Activated T-helper 1 cell treated with anti-CD3 and anti-CD28 coated beads, Interleukin-12 subunit alpha, Interleukin-12 subunit beta, Interleukin-2, Interleukin-4 antibody, amounts not matched to agents 30 ng/mL and 10 ng/mL and 1 ng/mL, durations not matched to agents 14 hours and 24 hours and 36 hours (primary cell): ENCODE measurements at regions of chr10 and their contacts with region 1.

Region 1: GRCh38 chr10:122298598-122299301 is 27.7 kb downstream of the BTBD16 start:
- DNase-seq: peak; percentile 19
- H3K4me3 Mint-ChIP-seq: no peak overlapping the region
- H3K27ac Mint-ChIP-seq: no peak overlapping the region
- H3K4me1 Mint-ChIP-seq: peaks cover 9% of the 10 kb centered on the region
- H3K27me3 Mint-ChIP-seq: peaks cover 9% of the 10 kb centered on the region

Region 2: DNA sequence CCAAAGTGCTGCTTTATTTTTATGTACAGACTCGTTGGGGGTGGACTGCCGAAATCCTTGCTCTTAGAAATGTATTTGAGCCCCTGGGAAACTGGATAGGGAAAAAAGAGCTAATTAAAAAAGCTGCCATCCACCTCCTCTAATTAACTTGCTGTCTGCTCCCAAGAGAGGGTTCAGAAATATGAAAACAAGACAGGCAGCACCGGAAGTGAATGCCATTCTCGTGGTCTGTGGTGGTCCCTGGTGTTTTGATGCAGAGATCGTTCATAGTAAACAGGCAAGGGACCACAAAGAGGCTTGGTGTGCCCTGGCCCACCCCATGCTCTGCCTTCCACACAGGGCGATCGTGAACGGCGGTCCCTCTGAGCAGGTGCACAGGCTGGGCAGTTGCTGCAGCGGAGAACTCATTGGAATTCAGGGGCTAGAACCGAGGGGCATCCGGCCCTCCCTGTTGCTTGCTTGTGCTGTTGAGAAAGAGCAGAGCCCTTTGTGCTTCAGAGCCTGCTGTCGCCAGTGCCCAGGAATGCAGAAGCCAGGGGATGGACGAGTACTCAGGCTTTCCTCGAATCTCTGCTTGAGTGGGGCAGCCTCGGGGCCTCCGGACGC is 106.7 kb before region 1 on chr10:
- intact Hi-C with region 1: no loop called
- DNase-seq: no peak
- H3K4me3 Mint-ChIP-seq: no peak overlapping the region
- H3K27ac Mint-ChIP-seq: no peak overlapping the region
- H3K4me1 Mint-ChIP-seq: no peaks in the 10 kb centered on the region
- H3K27me3 Mint-ChIP-seq: no peaks in the 10 kb centered on the region

Region 3: GRCh38 chr10:122310311-122311050 is 11.7 kb after region 1 on chr10:
- intact Hi-C with region 1: no loop called
- DNase-seq: no peak
- H3K4me3 Mint-ChIP-seq: no peak overlapping the region
- H3K27ac Mint-ChIP-seq: no peak overlapping the region
- H3K4me1 Mint-ChIP-seq: no peaks in the 10 kb centered on the region
- H3K27me3 Mint-ChIP-seq: peaks cover 11% of the 10 kb centered on the region

Region 4: DNA sequence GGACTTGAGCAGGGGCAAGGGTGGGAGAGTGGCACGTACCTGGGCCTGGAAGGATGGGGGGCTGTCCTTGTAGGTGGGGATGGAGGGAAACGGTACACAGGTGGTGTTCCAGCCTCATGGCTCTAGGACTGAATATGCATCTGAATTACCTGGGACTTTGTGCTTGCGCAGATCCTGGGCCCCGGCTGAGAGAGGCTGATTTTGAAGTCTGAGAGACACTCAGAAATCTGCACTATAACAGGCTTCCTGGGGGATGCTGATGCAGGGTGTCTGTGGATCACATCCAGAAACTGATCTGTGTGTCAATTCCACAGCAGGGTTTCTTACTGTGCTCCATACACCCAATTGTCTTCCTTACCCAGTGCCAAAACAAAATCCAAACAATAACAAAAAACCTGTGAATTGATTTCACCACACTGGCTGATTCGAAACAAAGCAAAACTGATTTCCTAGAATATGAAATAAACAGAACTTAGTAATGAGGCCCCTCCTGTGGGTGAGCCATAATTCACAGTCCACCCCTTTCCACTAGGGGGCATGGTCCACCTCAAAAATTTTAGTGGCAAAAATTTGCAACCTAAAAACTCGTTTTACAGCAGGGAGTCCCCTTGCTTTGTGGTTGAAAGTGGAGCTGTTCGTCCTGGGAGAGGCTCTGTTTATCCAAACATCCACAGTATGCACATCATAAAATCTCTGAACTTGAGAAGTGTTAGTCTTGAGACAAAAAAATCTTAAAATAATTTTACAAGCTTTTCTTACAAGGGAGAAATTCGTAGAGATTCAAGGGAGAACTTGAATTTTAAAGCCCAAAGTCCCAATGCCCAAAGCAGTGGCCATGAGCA is 43.8 kb after region 1 on chr10:
- intact Hi-C with region 1: loop called (anchors 1 kb)
- DNase-seq: peak; percentile 12
- H3K4me3 Mint-ChIP-seq: no peak overlapping the region
- H3K27ac Mint-ChIP-seq: no peak overlapping the region
- H3K4me1 Mint-ChIP-seq: no peaks in the 10 kb centered on the region
- H3K27me3 Mint-ChIP-seq: peaks cover 12% of the 10 kb centered on the region

Region 5: GRCh38 chr10:122703439-122704118 is 404.8 kb after region 1 on chr10:
- intact Hi-C with region 1: loop called (anchors 2 kb)
- DNase-seq: peak; percentile 4
- H3K4me3 Mint-ChIP-seq: no peak overlapping the region
- H3K27ac Mint-ChIP-seq: no peak overlapping the region
- H3K4me1 Mint-ChIP-seq: no peaks in the 10 kb centered on the region
- H3K27me3 Mint-ChIP-seq: no peaks in the 10 kb centered on the region

Region 6: DNA sequence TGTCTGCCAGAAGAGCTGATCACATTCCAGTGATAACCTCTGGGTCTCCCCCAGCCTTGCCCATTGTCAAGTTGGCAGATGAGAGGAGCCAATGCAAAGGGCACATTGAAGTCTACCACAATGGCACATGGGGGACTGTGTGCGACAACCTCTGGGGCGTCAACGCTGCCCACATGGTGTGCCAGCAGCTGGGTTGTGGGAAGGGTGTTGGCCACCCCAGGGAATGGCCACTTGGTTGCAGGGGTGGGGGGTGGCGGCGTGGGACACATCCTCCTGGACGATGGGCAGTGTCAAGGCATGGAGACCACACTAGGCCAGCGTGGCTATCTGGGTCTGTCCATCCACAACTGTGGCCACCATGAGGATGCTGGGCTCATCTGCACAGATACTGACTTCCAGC is 503.5 kb after region 1 on chr10:
- intact Hi-C with region 1: no loop called
- DNase-seq: no peak
- H3K4me3 Mint-ChIP-seq: no peak overlapping the region
- H3K27ac Mint-ChIP-seq: no peak overlapping the region
- H3K4me1 Mint-ChIP-seq: no peaks in the 10 kb centered on the region
- H3K27me3 Mint-ChIP-seq: no peaks in the 10 kb centered on the region